PC-9 (cell line): ENCODE measurements at regions of chr11 and their contacts with region 1.

Region 1: GRCh38 chr11:45045683-45046471 is 95.2 kb upstream of the TP53I11 start:
- DNase-seq: peak in 1 of 2 experiments; percentile 49
- H3K4me3 ChIP-seq: no peak overlapping the region
- H3K27ac ChIP-seq: no peak overlapping the region
- H3K4me1 ChIP-seq: peaks cover 9% of the 10 kb centered on the region; the same call in 1 of the 2 replicates
- H3K27me3 ChIP-seq: no peaks in the 10 kb centered on the region; the same call in 1 of the 2 replicates
- CTCF ChIP-seq: no peak

Region 2: GRCh38 chr11:44985741-44986140 is 60.1 kb before region 1 on chr11:
- CTCF ChIA-PET with region 1: no interaction called
- POLR2A ChIA-PET with region 1: interaction called, 20 read pairs
- intact Hi-C with region 1: no loop called
- DNase-seq: no peak
- H3K4me3 ChIP-seq: no peak overlapping the region
- H3K27ac ChIP-seq: no peak overlapping the region
- H3K4me1 ChIP-seq: peaks cover 2% of the 10 kb centered on the region
- H3K27me3 ChIP-seq: peaks cover 18% of the 10 kb centered on the region; the same call in 1 of the 2 replicates
- CTCF ChIP-seq: no peak

Region 3: GRCh38 chr11:45354976-45355705 is 309.3 kb after region 1 on chr11:
- CTCF ChIA-PET with region 1: no interaction called
- POLR2A ChIA-PET with region 1: no interaction called
- intact Hi-C with region 1: no loop called
- DNase-seq: peak in 1 of 2 experiments; percentile 13
- H3K4me3 ChIP-seq: no peak overlapping the region
- H3K27ac ChIP-seq: no peak overlapping the region
- H3K4me1 ChIP-seq: no peaks in the 10 kb centered on the region
- H3K27me3 ChIP-seq: peaks cover 59% of the 10 kb centered on the region; the same call in 1 of the 2 replicates
- CTCF ChIP-seq: no peak

Region 4: DNA sequence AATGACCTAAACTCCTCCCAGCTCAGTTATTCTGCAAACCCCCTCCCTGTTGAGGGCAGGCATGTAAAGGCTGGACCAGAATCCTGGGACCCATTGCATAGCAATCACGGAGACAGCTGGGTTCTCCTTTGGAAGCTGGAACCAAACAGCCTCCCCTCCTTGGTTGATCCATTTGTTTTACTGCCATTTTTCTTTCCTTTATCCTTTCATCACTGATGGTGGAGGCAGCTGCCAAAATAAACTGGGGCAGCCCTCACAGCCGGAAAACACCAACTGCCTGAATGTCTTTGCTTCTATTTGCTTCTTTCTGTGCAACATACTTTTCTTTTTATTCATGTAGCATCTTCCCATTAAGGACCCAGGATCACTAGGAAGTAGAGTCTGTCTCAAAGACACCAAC is 390.2 kb after region 1 on chr11:
- CTCF ChIA-PET with region 1: no interaction called
- POLR2A ChIA-PET with region 1: no interaction called
- intact Hi-C with region 1: no loop called
- DNase-seq: no peak
- H3K4me3 ChIP-seq: no peak overlapping the region
- H3K27ac ChIP-seq: no peak overlapping the region
- H3K4me1 ChIP-seq: no peaks in the 10 kb centered on the region
- H3K27me3 ChIP-seq: peaks cover 56% of the 10 kb centered on the region
- CTCF ChIP-seq: no peak